ENCODE measurements at regions of chr4 and their contacts with region 1.

Region 1: DNA sequence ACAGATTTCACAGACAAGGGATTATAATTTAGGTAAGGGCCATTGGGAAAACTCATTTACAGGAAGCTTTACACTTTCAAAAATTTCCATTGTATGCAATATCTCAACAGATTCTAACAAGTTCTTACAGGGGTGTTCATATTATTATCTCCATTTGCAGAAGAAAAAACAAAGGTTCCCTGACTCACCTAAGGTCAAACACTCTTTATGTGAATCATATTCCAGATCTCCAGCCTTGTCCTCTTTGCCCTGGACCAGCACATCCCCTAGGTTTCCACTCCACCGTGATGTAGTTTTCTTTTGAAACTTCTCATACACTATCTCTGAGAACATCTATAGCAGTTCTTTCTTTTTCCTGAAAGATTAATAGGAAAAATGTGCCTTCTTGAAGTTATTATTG is 96.4 kb upstream of the HS3ST1 start:
- DNase-seq: no peak
- ATAC-seq: no peak

Region 2: DNA sequence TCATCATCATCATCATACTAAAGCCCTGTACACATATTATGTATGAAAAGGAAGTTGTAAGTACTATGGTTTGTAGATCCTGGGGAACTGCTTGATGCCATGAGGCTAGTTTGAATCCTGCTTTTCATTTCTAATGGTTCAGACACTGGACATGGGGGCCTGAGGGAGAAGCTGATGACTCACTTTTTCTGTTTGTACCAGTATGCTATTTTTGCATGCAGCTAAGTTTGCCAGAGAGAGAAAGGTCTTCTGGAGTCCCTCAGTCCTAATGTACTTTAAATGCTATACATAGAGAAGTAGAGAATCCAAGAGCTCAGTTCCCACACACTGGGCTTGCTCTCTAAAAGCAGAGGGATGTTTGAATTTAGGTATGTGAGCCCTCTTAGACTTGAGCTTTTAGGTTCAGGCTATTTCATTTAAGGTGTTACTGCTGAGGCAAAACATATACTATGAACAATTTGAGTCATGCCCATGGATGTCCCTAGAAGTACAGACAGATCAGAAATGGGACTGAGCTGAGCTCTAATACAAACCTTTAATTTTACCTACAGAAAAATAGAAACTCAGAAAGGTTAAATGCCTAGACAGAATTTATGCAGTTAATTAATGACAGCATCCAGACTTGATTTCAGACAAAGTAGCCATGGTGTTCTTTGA is 78.8 kb before region 1 on chr4:
- intact Hi-C with region 1: no loop called
- DNase-seq: no peak
- ATAC-seq: no peak

Region 3: GRCh38 chr4:11483046-11483445 is 42.0 kb before region 1 on chr4:
- intact Hi-C with region 1: loop called in 1 of 2 experiments (anchors 2 kb)
- DNase-seq: no peak
- ATAC-seq: no peak

Region 4: GRCh38 chr4:11566444-11567022 is 41.4 kb after region 1 on chr4:
- intact Hi-C with region 1: no loop called
- DNase-seq: no peak
- ATAC-seq: peak; percentile 99

Measured in left colon (tissue), 2 donors.